ENCODE measurements at regions of chr1 and their contacts with region 1.

Region 1: DNA sequence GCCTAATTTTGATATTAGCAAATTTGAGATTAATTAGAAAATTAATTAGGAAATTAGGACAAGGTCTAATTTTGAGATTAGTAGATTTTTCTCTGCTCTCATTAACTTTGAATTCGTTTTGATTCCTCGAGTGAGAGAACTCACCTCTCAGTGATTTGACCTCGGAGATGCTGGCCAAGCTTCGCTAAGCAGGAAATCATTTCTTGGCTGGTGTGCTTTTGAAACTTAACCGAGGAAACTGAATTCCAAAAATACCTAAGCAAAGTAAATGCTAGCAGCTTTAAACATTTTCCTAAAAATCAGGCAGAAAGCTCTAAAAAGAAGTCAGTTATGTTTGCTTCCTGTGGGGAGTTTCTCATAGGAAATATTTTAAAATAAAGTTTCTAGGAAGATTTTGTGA is 34.9 kb downstream of the CDC14A start:
- DNase-seq: no peak
- H3K4me3 Mint-ChIP-seq: no peak overlapping the region
- H3K27ac Mint-ChIP-seq: no peak overlapping the region
- H3K4me1 Mint-ChIP-seq: peaks cover 26% of the 10 kb centered on the region
- H3K27me3 Mint-ChIP-seq: no peaks in the 10 kb centered on the region

Region 2: GRCh38 chr1:100308777-100309176 is 78.4 kb before region 1 on chr1:
- intact Hi-C with region 1: loop called (anchors 10 kb)
- DNase-seq: no peak
- H3K4me3 Mint-ChIP-seq: no peak overlapping the region
- H3K27ac Mint-ChIP-seq: no peak overlapping the region
- H3K4me1 Mint-ChIP-seq: peaks cover 13% of the 10 kb centered on the region
- H3K27me3 Mint-ChIP-seq: peaks cover 8% of the 10 kb centered on the region

Region 3: DNA sequence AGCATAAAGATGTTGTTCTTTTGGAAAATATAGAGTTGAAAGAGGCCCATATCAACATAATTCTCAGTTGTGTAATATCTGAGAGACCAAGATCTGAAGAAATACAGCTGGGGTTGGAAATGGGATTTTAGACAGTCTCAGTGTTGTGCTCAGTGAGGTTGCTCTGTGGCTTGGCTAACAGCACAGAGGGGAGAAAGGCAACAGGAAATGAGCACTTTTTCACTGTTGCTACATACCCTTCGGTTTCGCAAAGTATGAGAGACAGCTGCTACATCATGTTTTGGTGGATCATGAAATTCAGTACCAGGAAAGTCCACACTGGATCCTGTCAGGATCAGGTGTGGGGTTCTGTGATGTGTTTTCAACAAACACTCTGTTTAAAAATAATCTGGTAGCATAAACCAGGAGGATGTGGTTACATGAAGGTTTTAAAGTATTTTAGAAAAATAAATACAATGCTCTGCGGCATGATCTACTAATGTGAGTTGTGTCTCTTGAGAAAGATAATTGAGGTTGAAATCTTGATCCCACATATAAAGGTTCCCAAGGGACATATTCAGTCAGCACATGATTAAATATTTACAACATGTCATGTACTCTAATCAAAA is 143.8 kb after region 1 on chr1:
- intact Hi-C with region 1: no loop called
- DNase-seq: no peak
- H3K4me3 Mint-ChIP-seq: no peak overlapping the region
- H3K27ac Mint-ChIP-seq: no peak overlapping the region
- H3K4me1 Mint-ChIP-seq: peaks cover 26% of the 10 kb centered on the region
- H3K27me3 Mint-ChIP-seq: peaks cover 29% of the 10 kb centered on the region

Measured in activated T-helper 2 cell treated with anti-CD3 and anti-CD28 coated beads, Interferon-gamma antibody, Interleukin-2, Interleukin-4, amounts not matched to agents 10 μg/mL and 5 μg/mL and 100 μg/mL, durations not matched to agents 14 hours and 24 hours and 36 hours (primary cell).